ENCODE measurements at regions of chr13 and their contacts with region 1.

Region 1: DNA sequence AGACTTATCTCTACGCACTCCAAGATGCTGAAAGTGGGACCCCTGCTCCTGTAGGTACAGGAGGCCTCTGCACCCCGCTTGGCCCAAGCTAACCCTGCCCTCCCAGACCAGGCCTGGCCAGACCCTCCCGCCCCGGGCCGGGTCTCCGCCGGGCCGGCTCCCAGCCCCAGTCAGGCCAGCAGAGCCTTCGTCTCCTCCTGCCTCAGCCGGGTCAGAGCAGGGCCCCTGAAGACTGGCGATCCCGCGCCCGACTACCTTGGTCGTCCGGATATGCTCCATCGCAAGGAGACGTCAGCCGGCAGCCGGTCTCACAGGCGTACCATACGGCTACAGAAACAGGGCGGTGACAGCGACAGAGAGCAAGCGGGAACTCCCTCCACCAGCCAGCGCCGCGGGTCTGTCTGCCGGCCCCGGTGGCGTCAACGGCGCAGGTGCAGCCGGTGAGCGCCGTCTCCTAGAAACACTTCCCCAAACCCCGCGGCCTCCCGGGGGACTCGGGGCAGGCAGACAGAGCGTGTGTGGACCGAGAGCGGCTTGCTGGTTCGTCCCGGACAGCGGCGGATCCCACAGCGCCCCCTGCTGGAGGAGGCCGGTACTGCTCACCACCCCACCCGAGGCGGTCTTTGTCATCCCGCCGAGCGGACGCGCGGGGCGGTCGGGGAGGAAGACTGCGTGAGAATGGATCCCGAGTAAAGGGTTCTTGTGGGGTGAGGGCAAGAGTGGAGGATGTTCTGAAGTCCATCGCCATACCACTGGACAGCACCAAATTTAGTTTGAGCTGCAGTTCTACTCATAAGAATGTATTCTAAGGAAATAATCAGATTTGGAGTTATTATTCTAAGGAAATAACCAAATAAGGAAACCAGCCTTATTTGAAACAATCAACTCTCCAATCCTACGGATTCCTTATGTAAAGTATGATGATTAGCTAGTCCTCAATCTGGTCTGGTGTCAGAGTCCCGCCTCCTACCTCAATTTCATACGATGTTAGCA is at the start of gene MTMR6:
- DNase-seq: peak; percentile 96
- ATAC-seq: peak; percentile 93
- H3K4me3 Mint-ChIP-seq: peak within 1 kb of the TSS; percentile 90
- H3K27ac Mint-ChIP-seq: peak within 1 kb of the TSS; percentile 96
- H3K4me1 Mint-ChIP-seq: peaks cover 36% of the 10 kb centered on the region
- H3K27me3 Mint-ChIP-seq: peaks cover 10% of the 10 kb centered on the region
- total RNA-seq, gene MTMR6: 10.7 to 11.1 TPM

Region 2: DNA sequence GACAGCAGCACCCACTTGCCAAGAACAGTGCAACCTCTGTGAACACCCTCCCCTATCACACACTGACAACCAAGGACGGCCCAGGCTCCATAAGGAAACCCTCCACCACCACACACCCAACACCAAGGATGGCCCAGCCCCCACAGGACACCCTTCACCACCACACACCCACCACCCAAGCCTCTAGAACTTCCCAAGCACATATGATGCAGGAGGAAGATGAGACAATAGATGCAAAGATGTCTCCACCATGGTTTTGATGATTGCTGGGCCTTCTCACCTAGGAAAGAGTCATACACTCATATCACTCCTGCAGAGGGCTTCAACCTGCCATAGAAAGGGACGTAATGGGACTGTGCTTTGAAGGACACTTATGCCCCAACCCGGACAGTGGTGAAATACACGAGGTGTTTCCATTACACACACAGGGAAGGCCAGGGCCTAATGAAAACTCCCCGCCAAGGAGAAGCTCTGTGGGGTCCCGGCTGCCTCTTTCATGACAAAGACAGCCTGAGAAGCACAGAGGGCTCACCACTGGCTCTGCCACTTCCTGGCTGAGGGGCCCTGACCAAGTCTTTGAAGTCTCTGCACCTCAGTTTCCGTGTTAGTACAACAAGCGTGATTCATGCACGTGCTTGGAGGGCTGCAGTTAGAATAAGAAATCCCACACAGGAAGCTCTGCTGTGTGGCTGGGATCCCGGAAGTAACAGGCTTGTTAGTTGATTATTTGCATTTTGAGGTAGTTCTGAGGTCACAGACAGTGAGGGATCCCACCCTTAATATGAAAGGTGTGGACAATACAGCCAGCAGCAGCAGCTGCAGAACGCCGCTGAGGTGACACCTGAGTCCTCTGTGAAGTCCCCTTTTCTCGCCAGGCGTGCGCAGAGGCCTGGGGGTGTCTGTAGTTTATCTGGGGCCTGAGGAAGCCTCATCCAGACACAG is 669.0 kb before region 1 on chr13:
- CTCF ChIA-PET with region 1: interaction called, 3 read pairs
- POLR2A ChIA-PET with region 1: no interaction called
- intact Hi-C with region 1: loop called in 1 of 2 experiments (anchors 5 kb)
- DNase-seq: peak; percentile 81
- ATAC-seq: peak; percentile 92
- H3K4me3 Mint-ChIP-seq: no peak overlapping the region
- H3K27ac Mint-ChIP-seq: peak overlapping the region; percentile 73
- H3K4me1 Mint-ChIP-seq: peaks cover 33% of the 10 kb centered on the region
- H3K27me3 Mint-ChIP-seq: no peaks in the 10 kb centered on the region

Region 3: DNA sequence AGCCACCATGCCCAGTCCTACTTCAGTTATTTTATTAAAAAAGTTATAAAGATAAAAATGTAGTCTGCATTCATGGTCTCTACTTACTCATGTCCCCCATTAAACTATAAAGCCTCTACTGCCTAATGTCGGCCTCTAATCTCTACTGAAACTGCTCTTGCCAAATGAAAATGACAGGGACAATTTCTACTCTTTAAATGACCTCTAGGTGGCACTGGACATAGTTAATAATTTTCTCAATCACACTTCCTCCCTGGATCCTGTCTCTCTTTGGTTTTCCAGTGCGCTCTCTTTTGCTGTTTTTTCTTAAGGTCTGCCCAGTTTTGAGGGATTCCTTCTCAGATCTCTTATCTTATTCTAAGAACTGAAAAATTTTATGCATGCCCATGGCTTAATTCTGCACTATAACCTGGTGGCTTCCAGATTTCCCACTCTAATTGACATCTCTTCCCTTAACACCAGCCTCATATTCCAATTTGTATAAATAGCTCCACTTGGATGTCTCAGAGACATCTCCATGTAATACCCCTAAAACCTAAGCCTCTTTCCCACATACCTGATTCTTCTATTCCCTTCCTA is 54.2 kb before region 1 on chr13:
- CTCF ChIA-PET with region 1: no interaction called
- POLR2A ChIA-PET with region 1: no interaction called
- intact Hi-C with region 1: loop called in 1 of 2 experiments (anchors 2 kb)
- DNase-seq: no peak
- ATAC-seq: peak; percentile 42
- H3K4me3 Mint-ChIP-seq: no peak overlapping the region
- H3K27ac Mint-ChIP-seq: no peak overlapping the region
- H3K4me1 Mint-ChIP-seq: peaks cover 3% of the 10 kb centered on the region
- H3K27me3 Mint-ChIP-seq: peaks cover 4% of the 10 kb centered on the region

Region 4: GRCh38 chr13:25276748-25277147 is 10.5 kb before region 1 on chr13:
- CTCF ChIA-PET with region 1: interaction called, 14 read pairs
- POLR2A ChIA-PET with region 1: interaction called, 3 read pairs
- intact Hi-C with region 1: loop called in 1 of 2 experiments (anchors 1 kb)
- DNase-seq: peak; percentile 29
- ATAC-seq: peak; percentile 91
- H3K4me3 Mint-ChIP-seq: no peak overlapping the region
- H3K27ac Mint-ChIP-seq: no peak overlapping the region
- H3K4me1 Mint-ChIP-seq: peaks cover 54% of the 10 kb centered on the region
- H3K27me3 Mint-ChIP-seq: no peaks in the 10 kb centered on the region

Region 5: DNA sequence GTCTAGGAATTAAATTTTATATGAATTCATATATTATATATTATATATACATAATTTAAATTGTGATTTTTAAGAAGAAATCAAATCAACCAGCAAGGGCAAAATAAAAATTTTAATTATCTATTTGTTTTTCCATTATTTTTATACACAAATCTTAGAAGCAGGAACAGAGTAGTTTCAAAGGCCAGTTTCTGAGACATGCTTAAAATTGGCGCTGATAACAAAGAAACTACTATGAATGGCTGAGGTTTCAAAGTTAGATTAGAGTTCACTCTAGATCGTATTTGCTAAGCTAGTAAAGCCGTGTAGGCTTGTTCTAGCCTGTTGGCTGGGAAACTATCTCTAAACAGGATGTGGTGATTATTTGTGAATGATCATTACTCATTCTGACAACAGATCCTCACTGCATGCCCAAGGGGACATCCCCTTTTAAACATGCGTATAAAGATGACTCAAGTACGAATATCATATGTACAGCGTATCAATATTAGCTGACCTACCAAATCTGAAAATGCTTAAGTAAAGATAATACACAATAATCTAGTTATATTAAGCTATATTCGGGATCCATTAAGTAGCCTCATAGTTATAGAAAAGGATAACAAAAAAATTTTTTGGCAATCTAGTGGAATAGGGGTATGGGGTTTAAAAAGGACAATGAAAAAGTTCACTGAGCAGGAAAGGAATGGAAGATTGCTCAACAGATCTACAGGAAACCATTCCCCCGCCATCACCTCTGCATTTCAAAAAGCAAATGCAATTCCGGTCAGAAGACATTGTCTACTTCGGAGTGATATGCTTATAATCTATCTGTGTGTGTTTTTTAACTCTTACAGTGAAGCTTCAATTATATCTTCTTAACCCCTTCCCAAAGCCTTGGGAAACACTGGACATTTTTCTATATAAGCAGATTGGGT is 614.5 kb after region 1 on chr13:
- CTCF ChIA-PET with region 1: no interaction called
- POLR2A ChIA-PET with region 1: no interaction called
- intact Hi-C with region 1: loop called in 1 of 2 experiments (anchors 10 kb)
- DNase-seq: peak; percentile 48
- ATAC-seq: peak; percentile 88
- H3K4me3 Mint-ChIP-seq: no peak overlapping the region
- H3K27ac Mint-ChIP-seq: no peak overlapping the region
- H3K4me1 Mint-ChIP-seq: peaks cover 20% of the 10 kb centered on the region
- H3K27me3 Mint-ChIP-seq: peaks cover 2% of the 10 kb centered on the region